ENCODE measurements at regions of chr17 and their contacts with region 1.

Region 1: DNA sequence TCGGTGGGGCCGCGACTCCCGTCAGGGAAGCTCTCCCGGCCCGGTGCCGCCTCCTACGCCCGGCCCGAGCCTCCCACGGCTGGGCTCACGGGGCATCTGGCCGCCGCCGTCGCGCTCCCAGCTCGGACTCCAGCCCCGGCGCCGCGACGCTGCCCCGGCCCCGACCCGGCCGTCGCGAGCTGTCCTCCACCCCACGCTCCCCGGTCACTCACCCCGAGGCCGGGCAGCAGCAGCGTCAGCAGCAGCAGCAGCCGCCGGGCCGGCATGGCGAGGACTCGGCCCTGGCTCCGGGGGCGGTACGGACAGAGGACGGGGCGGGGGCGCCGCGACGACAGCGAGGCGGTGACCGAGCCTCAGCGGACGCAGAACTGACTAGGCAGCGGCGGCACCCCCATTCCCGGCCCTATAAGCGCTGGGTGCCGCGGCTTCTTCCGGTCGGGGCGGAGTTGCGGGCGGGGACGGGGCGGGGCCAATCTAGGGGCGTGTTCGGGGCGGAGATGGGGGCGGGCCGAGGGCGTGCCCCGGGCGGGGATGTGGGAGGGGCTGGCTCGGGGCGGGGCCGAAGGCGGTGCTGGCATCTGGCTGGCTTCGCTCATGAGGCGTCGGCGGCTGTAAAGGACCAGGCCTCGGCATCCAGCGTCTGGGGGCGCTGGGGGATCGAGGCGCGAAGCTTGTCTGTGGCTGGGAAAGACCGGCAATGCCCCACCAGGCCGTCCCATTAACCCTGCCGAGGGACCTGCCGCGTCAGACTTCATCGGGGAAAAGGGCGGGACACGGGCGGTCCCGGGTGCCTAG is at the start of gene ERN1:
- DNase-seq: peak; percentile 89 to 98
- H3K4me3 ChIP-seq: peak within 1 kb of the TSS; percentile 71
- CTCF ChIP-seq: no peak
- POLR2A ChIP-seq: no peak
- total RNA-seq, gene ERN1: 18.2 to 44.0 (median 22.8) TPM

Region 2: DNA sequence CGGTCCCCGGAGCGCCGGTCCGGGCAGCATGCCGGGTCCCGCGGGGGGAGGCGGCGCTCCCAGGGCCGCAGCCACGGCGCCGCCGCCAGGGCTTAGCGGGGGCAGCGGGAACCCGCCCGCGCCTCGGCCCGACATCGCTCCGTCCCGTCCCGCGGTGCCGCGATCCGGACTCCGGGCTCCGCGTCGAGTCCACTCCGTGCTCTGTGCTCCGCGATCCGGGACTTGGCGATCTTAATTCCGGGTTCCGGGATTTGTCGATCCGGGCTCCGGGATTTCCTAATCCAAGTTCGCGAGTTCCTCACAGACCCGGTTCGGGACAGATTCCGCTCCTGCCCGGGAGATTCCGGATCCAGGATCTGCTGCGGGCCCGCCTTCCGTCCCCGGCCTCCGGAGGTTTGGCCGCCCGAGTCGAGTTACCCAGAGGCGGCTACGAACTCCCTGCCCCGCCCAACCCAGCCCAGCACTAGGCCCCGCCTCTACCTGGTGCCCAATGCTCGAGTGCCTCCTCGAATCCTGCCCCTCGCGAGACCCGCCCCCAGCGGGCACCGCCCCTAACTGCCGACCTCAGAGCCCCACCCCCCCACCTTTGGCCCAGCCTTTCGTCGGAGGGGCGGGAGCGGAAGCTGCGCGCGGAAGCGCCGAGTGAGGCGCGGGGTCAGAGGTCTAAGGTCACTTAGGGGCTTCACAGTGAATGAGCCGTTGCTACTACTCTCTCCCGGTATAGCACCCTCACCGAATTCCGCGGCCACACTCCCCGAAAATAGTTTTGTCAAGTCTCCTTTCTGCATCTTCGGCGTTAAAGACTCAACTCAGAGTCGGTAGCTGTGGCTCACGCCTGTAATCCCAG is 287.2 kb before region 1 on chr17 and contains the start of gene SMARCD2:
- intact Hi-C with region 1: no loop called
- DNase-seq: peak; percentile 98 to 100
- H3K4me3 ChIP-seq: peak within 1 kb of the TSS; percentile 90
- CTCF ChIP-seq: peak in 1 of 3 donors; percentile 11
- POLR2A ChIP-seq: no peak
- total RNA-seq, gene SMARCD2: 235 to 310 (median 272) TPM

Region 3: GRCh38 chr17:64025732-64026294 is 104.1 kb before region 1 on chr17:
- intact Hi-C with region 1: loop called (anchors 5 kb)
- DNase-seq: peak; percentile 50 to 96
- H3K4me3 ChIP-seq: no peak overlapping the region
- CTCF ChIP-seq: peak in 1 of 3 donors; percentile 77
- POLR2A ChIP-seq: no peak

Region 4: DNA sequence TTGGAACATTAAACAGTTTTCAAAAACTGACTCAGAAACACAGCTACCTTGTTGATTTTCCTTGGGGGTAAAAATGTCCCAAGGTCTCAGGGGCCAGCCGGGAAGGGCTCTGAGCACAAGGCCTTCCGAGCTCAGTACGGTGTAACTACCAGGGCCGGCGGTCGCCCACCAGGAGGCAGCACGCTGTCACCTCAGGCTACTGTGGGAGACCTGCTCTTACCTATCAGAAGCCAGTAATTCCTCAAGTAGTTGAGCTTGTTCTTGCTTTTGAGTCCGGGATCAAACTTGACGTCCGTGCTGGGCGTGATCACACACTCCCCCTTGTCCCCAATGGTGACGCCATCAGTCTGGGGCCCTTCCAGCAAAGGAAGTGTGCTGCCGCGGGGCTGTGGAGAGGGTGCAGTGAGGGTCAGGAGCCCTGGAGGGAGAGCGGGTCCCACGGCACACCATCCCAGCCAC is 66.2 kb before region 1 on chr17:
- intact Hi-C with region 1: loop called (anchors 10 kb)
- DNase-seq: no peak
- H3K4me3 ChIP-seq: no peak overlapping the region
- CTCF ChIP-seq: no peak
- POLR2A ChIP-seq: no peak

Measured in lower leg skin (tissue), 4 donors.